CD14-positive monocyte (primary cell): ENCODE measurements at regions of chr3 and their contacts with region 1.

Region 1: GRCh38 chr3:141796081-141796888 is 33.1 kb downstream of the GRK7 start:
- DNase-seq: peak; percentile 53 to 80 (median 72)
- H3K4me3 ChIP-seq: peak overlapping the region; percentile 30 to 81 (median 55)
- H3K4me3 Mint-ChIP-seq: peak overlapping the region; percentile 91 to 98
- H3K27ac ChIP-seq: peak overlapping the region; percentile 47 to 84
- H3K27ac Mint-ChIP-seq: peak overlapping the region; percentile 72 to 95 (median 88)
- H3K4me1 ChIP-seq: peaks cover 28 to 30% of the 10 kb centered on the region in 2 donors
- H3K4me1 Mint-ChIP-seq: peaks cover 40% of the 10 kb centered on the region
- H3K27me3 ChIP-seq: no peaks in the 10 kb centered on the region
- H3K27me3 Mint-ChIP-seq: peaks cover 1 to 8% (median 2%) of the 10 kb centered on the region in 3 donors
- CTCF ChIP-seq: no peak

Region 2: DNA sequence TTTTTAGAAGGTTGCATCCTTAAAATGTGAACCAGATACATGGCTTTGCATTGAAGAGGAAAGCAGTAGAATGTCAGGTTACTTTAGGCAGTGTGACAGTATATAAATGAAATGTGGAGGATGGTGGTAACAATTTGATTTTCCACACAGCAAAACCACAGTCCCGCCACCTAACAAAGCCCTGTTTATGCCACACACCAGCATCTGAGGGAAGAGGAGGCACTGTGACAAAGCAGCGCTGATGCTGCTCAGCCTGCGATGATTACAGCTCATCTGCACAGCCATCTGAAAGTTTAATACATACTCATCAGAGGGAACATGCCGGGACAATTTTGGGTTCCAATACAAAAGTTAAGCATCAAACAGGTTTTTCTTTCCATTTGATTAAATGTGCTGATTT is 49.3 kb before region 1 on chr3:
- intact Hi-C with region 1: loop called in 1 of 2 experiments (anchors 10 kb)
- DNase-seq: no peak
- H3K4me3 ChIP-seq: no peak overlapping the region
- H3K4me3 Mint-ChIP-seq: no peak overlapping the region
- H3K27ac ChIP-seq: no peak overlapping the region
- H3K27ac Mint-ChIP-seq: no peak overlapping the region
- H3K4me1 ChIP-seq: no peaks in the 10 kb centered on the region
- H3K4me1 Mint-ChIP-seq: peaks cover 4% of the 10 kb centered on the region
- H3K27me3 ChIP-seq: no peaks in the 10 kb centered on the region
- H3K27me3 Mint-ChIP-seq: peaks cover 0 to 1% (median 0%) of the 10 kb centered on the region in 3 donors
- CTCF ChIP-seq: no peak

Region 3: GRCh38 chr3:141853081-141853601 is 56.9 kb after region 1 on chr3:
- intact Hi-C with region 1: loop called in 1 of 2 experiments (anchors 10 kb)
- DNase-seq: peak; percentile 67 to 78 (median 77)
- H3K4me3 ChIP-seq: peak overlapping the region in 2 of 3 experiments; percentile 24 to 48
- H3K4me3 Mint-ChIP-seq: peak overlapping the region; percentile 13 to 68
- H3K27ac ChIP-seq: peak overlapping the region; percentile 79 to 85
- H3K27ac Mint-ChIP-seq: peak overlapping the region; percentile 89 to 97 (median 95)
- H3K4me1 ChIP-seq: peaks cover 70 to 71% of the 10 kb centered on the region in 2 donors
- H3K4me1 Mint-ChIP-seq: peaks cover 57% of the 10 kb centered on the region
- H3K27me3 ChIP-seq: no peaks in the 10 kb centered on the region
- H3K27me3 Mint-ChIP-seq: no peaks in the 10 kb centered on the region
- CTCF ChIP-seq: no peak

Region 4: DNA sequence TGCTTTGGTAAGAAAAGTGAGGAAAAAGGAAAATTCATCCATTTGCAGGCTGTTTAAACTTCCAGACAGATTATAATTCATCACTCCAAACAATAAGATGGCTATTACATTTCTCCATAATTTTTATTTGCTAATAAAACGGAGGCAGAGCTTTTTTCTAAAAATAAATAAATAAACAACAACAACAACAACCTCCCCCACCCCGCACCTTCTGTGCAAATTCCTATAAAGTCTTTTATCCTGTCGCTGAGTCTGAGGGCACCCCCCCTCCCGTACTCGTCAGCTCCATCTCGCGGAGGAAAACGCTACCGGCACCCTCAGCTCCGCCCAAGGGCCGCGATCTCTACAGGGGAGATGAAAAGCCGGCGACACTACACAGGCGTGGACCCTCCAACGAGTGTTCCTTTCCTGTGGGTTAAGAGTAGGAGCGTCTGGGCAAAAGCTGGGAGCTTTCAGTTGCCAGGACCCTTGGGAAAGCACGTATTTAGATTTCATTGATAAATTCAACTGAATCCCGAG is 79.1 kb after region 1 on chr3:
- intact Hi-C with region 1: loop called in 1 of 2 experiments (anchors 5 kb)
- DNase-seq: peak; percentile 72 to 82 (median 72)
- H3K4me3 ChIP-seq: peak overlapping the region; percentile 83 to 95 (median 94)
- H3K4me3 Mint-ChIP-seq: peak overlapping the region; percentile 90 to 94
- H3K27ac ChIP-seq: peak overlapping the region; percentile 96 to 100
- H3K27ac Mint-ChIP-seq: peak overlapping the region; percentile 98 to 99 (median 99)
- H3K4me1 ChIP-seq: peaks cover 17 to 34% of the 10 kb centered on the region in 2 donors
- H3K4me1 Mint-ChIP-seq: peaks cover 35% of the 10 kb centered on the region
- H3K27me3 ChIP-seq: no peaks in the 10 kb centered on the region
- H3K27me3 Mint-ChIP-seq: peaks cover 0 to 1% (median 0%) of the 10 kb centered on the region in 3 donors
- CTCF ChIP-seq: peak; percentile 93

Region 5: DNA sequence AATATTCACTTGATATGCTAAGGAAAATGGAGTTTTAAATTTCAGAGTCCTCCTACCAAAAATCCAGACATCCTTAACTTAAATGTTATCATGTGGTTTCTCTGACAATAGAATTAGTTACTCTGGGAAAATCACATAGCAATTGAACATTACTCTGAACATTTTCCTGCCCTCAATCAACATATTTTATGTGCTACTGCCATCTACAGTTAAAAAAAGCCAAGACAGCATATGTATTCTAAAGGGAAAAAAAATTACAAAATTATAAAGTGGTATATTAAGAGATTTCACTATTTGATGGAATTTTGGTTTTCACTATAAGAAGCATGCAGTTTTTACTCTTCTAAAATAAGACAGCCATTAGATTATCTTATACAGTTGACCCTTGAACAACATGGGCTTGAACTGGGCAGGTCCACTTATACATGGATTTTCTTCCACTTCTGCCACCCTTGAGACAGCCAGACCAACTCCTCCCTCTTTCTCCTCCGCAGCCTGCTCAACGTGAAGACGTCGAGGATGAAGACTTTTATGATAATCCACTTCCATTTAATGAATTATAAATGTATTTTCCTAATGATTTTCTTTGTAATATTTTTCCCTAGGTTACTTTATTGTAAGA is 202.5 kb after region 1 on chr3:
- intact Hi-C with region 1: no loop called
- DNase-seq: no peak
- H3K4me3 ChIP-seq: no peak overlapping the region
- H3K4me3 Mint-ChIP-seq: no peak overlapping the region
- H3K27ac ChIP-seq: no peak overlapping the region
- H3K27ac Mint-ChIP-seq: peak overlapping the region in 1 of 7 donors; percentile 52
- H3K4me1 ChIP-seq: no peaks in the 10 kb centered on the region
- H3K4me1 Mint-ChIP-seq: peaks cover 7% of the 10 kb centered on the region
- H3K27me3 ChIP-seq: no peaks in the 10 kb centered on the region
- H3K27me3 Mint-ChIP-seq: no peaks in the 10 kb centered on the region
- CTCF ChIP-seq: no peak